ENCODE measurements at regions of chr20 and their contacts with region 1.

Region 1: GRCh38 chr20:49484180-49485140 is 2.0 kb upstream of the KCNB1 start:
- DNase-seq: peak; percentile 78 to 87
- H3K4me3 ChIP-seq: peak overlapping the region; percentile 51 to 61
- H3K27ac ChIP-seq: no peak overlapping the region
- H3K4me1 ChIP-seq: peaks cover 0 to 33% (median 22%) of the 10 kb centered on the region in 4 donors
- H3K27me3 ChIP-seq: peaks cover 0 to 25% of the 10 kb centered on the region in 2 donors
- CTCF ChIP-seq: peak; percentile 76 to 88

Region 2: GRCh38 chr20:49338061-49338460 is 146.4 kb before region 1 on chr20:
- intact Hi-C with region 1: loop called (anchors 2 kb)
- DNase-seq: no peak
- H3K4me3 ChIP-seq: no peak overlapping the region
- H3K27ac ChIP-seq: no peak overlapping the region
- H3K4me1 ChIP-seq: peaks cover 0 to 16% (median 3%) of the 10 kb centered on the region in 4 donors
- H3K27me3 ChIP-seq: peaks cover 0 to 7% of the 10 kb centered on the region in 2 donors
- CTCF ChIP-seq: no peak

Region 3: GRCh38 chr20:49384437-49385088 is 99.9 kb before region 1 on chr20:
- intact Hi-C with region 1: loop called (anchors 5 kb)
- DNase-seq: peak; percentile 66 to 79
- H3K4me3 ChIP-seq: no peak overlapping the region
- H3K27ac ChIP-seq: no peak overlapping the region
- H3K4me1 ChIP-seq: peaks cover 0 to 49% (median 21%) of the 10 kb centered on the region in 4 donors
- H3K27me3 ChIP-seq: no peaks in the 10 kb centered on the region
- CTCF ChIP-seq: peak; percentile 49 to 51

Region 4: GRCh38 chr20:49534255-49534712 is 49.8 kb after region 1 on chr20:
- intact Hi-C with region 1: loop called (anchors 5 kb)
- DNase-seq: no peak
- H3K4me3 ChIP-seq: no peak overlapping the region
- H3K27ac ChIP-seq: peak overlapping the region; percentile 9 to 13
- H3K4me1 ChIP-seq: peaks cover 0 to 41% (median 7%) of the 10 kb centered on the region in 4 donors
- H3K27me3 ChIP-seq: no peaks in the 10 kb centered on the region
- CTCF ChIP-seq: peak; percentile 82 to 86

Measured in tibial artery (tissue), 4 donors.